ENCODE measurements at regions of chr1 and their contacts with region 1.

Region 1: DNA sequence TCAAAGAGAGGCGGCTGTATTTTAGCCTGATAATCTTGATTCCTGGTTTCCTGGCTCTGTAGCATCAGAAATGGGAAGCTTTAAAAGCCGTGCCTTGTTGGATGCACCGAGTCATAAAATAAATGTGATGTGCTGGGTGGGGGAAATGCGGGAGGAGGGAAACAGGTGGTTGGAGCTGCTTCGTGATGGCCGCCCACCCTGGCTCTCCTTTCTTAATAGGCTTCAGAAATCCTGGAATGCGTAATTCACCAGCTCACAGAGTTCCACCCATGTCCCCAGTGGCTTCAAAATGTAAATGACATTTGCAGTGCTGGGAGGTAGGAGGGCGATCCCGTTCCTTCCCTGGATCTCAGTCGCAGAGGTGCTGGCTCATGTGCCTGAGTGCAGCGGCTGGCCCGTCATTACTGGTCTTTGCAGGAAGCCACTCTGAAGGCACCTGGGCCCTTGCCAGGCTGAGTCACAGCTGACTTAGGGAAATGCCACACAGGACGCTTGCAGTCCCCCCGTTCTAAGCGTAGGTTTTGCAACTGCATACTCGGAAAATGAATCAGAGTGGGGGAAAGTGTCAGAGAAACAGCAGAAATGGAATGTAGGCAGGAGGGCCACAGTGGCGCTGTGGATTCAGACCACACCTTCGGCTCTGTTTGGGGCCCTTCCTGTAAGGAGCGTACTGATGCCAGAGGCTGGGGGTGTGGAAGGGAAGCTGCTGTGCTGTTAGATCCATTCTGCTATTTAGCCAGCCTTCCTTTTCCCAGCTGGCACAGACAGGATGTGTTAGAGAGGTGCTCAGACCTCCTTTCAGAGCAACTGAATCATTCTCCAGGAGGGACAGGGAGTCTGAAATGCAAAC is 37.6 kb downstream of the GALNT2 start:
- DNase-seq: peak; percentile 98
- H3K4me3 ChIP-seq: peak overlapping the region in 3 of 4 donors; percentile 2 to 4 (median 2)
- H3K27ac ChIP-seq: peak overlapping the region; percentile 58 to 88 (median 68)
- H3K4me1 ChIP-seq: peaks cover 0 to 69% (median 61%) of the 10 kb centered on the region in 4 donors
- H3K27me3 ChIP-seq: no peaks in the 10 kb centered on the region
- CTCF ChIP-seq: no peak
- EP300 ChIP-seq: peak in 1 of 4 donors; percentile 82
- POLR2A ChIP-seq: no peak

Region 2: DNA sequence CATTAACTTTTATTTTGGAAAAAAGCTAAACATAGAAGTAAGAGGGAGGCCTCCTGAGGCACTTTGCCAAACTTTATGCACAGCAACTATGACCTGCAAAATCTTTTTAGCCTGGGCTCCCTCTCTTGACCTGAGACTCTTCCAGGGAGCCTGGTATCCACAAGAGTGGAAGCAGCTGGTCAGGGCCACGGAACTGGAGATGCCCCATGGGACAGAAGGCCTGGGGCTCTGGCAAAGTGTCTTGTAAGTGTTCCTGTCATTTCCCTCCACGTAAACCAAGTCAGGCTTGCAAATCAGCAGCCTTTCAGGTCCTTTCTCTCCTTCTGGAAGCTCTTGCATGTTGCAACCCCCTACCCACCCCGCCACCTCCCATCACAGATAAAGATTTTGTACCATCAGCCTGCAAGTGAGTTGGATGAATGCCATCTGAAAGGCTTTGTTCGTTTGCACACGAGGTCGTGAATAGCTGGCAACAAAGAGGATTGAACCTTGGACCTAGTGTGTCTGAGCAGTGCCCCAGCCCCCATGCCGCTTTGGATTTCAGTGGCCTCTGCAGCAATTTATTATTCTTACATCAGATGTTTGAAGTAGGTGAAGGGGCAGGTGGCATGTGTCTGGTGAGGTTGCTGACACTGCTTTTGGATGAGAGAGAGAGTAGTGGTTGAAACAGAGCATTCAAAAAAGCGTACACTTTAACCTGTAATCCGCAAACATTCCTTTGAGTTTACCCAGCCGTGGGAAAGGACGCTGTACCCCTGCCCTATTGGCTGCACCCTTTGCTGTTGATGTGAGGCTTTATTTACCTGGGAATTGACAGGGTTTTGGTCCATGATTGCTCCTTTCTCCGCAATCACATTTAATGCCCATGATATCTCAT is 54.0 kb after region 1 on chr1:
- intact Hi-C with region 1: loop called (anchors 5 kb)
- DNase-seq: no peak
- H3K4me3 ChIP-seq: no peak overlapping the region
- H3K27ac ChIP-seq: no peak overlapping the region
- H3K4me1 ChIP-seq: peaks cover 0 to 32% (median 16%) of the 10 kb centered on the region in 4 donors
- H3K27me3 ChIP-seq: no peaks in the 10 kb centered on the region
- CTCF ChIP-seq: no peak
- EP300 ChIP-seq: no peak
- POLR2A ChIP-seq: no peak

Region 3: DNA sequence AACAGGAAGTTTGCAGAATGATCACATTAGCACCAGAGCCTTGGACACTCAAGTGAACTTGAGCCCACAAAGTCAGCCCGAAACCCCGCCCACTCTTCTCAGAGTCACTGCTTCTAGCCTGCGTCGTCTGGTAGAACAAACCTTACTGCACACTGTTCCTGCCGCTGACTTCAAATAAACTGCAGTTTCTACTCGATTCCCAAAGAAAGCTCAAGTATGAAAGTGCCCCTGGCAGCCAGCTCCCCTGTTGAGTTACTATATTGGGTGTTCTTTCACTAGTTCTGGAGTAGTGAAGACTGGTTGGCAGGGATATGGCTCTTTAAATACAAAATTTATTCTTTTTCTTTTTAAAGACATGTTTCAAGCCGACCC is 127.1 kb after region 1 on chr1:
- intact Hi-C with region 1: no loop called
- DNase-seq: peak; percentile 87
- H3K4me3 ChIP-seq: no peak overlapping the region
- H3K27ac ChIP-seq: peak overlapping the region in 1 of 4 donors; percentile 34
- H3K4me1 ChIP-seq: peaks cover 0 to 9% (median 3%) of the 10 kb centered on the region in 4 donors
- H3K27me3 ChIP-seq: no peaks in the 10 kb centered on the region
- CTCF ChIP-seq: no peak
- EP300 ChIP-seq: no peak
- POLR2A ChIP-seq: no peak

Region 4: DNA sequence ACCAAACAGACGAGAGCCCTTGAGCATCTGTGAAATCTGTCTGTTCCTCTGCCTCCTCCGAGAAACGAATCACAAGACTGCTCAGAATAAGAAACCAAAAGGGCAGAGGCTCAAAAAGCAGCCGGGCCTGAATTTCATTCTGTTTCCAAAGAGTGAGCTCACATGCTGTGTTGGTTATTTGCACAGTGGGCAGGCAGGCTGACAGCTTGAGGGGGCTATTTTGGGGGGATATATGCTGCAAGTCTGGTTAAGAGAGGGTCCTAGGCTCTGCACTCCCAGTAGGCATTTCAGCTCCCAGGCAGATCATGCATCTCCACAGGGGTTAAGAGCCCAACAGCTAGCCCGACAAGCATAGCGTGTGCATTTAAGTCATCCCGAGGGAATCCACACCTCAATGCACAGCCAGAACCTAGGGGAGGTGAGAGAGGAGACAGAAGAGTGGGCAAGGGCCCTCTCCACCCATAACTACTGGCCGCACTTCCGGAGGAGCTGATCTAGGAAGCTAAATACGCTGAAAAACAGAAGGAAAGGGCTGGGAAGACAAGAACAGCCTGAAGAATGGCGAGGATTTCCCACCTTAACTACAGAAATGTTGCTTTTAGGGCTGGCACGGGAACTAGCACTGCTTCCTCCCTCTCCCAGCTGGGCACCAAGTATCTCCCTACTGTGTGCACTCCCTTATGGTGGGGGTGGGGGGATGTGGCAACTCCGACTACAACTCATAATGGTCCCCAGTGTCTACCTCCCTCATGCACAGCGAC is 317.8 kb after region 1 on chr1:
- intact Hi-C with region 1: no loop called
- DNase-seq: no peak
- H3K4me3 ChIP-seq: no peak overlapping the region
- H3K27ac ChIP-seq: no peak overlapping the region
- H3K4me1 ChIP-seq: peaks cover 0 to 11% (median 8%) of the 10 kb centered on the region in 4 donors
- H3K27me3 ChIP-seq: peaks cover 30 to 82% (median 36%) of the 10 kb centered on the region in 3 donors
- CTCF ChIP-seq: no peak
- EP300 ChIP-seq: no peak
- POLR2A ChIP-seq: no peak

Measured in sigmoid colon (tissue), 7 donors.